ENCODE measurements at regions of chr3 and their contacts with region 1.

Region 1: GRCh38 chr3:73766599-73767381 is 142.0 kb upstream of the PDZRN3 start:
- DNase-seq: no peak

Region 2: DNA sequence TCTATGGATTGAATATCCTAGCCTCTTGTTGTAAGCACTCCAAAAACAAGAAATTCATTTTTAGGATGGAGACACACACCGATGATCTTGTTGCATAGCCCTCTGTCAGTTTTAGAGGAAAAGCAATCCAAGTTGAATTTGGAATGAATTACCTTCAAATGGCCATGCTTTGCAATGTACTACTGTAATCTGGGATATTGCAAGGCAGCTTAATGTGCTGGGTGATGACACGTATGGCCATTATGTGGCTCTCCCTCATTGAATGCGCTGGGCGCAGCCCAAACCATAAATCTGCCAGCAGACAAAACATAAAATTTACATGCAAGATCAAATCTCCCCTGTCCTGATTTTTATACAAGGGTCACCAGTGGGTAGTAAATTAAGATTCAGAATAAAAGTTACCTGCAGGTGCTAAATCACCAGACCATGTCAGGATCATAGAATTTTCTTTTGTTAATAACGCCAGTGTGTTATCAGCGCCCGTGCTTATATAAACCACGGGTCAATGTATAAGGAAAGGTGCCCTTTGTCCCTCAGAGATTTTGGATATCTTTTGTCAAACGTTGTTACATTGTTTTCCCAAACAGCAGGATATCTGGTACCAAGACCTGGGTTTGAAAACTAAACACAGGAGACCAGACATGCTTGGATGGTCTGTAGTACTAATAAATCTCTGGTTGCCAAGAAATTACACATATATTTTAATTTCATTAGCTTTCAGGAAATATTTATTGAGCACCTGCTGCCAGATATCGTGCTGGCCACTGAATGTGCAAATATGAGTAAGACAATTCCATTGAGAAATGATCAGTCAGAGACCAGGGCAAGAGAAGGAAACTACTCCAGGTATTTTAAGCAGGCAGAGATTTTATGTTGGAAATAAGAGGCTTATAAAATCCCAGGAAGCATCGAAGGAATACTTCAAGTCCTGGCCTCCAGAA is 468.3 kb before region 1 on chr3:
- intact Hi-C with region 1: no loop called
- DNase-seq: no peak

Region 3: GRCh38 chr3:73547427-73548248 is 219.2 kb before region 1 on chr3:
- intact Hi-C with region 1: loop called (anchors 10 kb)
- DNase-seq: no peak